ENCODE measurements at regions of chr1 and their contacts with region 1.

Region 1: GRCh38 chr1:16366722-16367257 is at the start of gene SZRD1:
- DNase-seq: peak; percentile 97
- ATAC-seq: peak; percentile 95
- H3K4me3 ChIP-seq: peak within 1 kb of the TSS; percentile 56 to 92
- H3K27ac ChIP-seq: peak within 1 kb of the TSS; percentile 72 to 95
- H3K4me1 ChIP-seq: peaks cover 2 to 3% of the 10 kb centered on the region in 2 donors
- H3K27me3 ChIP-seq: no peaks in the 10 kb centered on the region
- total RNA-seq, gene SZRD1: 128 to 172 TPM

Region 2: GRCh38 chr1:16078925-16079656 is 287.7 kb before region 1 on chr1:
- intact Hi-C with region 1: loop called (anchors 5 kb)
- DNase-seq: peak; percentile 84 to 92
- ATAC-seq: peak; percentile 80
- H3K4me3 ChIP-seq: no peak overlapping the region
- H3K27ac ChIP-seq: no peak overlapping the region
- H3K4me1 ChIP-seq: no peaks in the 10 kb centered on the region
- H3K27me3 ChIP-seq: no peaks in the 10 kb centered on the region

Region 3: DNA sequence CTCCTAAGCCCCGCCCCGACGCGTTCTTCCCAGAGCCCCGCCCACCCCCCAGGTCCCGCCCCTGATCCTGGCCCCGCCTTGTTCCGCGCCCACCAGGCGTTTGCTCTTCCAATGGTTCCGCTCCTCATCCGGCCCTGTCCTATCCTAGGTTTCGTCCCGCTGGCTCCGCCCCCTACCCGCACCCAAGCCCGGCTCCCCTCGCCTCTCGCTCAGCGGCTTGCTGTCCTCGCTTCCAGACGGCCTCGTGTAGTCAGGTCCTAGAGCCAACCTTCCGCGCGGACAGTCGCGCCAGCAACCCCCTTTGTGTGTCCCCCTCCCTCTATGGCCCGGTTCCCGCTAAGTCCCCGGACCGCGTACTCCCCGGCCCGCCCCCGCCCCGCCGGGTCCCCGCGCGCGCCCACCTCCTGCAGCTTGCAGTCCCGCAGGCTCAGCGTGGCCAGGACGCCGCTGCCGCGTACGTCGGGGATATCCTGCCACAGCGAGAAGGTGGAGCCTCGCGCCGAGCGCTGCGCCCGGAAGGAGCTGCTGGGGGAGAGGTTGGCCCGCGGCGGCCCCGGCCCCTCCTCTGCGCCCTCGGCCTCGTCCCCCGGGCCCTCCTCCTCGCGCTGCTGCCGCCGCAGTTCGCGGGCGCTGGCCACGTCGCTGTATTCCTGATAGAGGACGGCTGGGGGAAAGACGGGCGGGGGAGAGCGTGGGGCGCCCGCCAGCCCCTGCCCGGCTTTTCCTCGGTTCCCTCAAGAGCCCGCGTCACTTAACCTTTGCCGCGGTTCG is 160.1 kb before region 1 on chr1:
- intact Hi-C with region 1: loop called in 1 of 2 experiments (anchors 5 kb)
- DNase-seq: peak; percentile 99
- ATAC-seq: peak; percentile 94
- H3K4me3 ChIP-seq: peak overlapping the region in 1 of 2 donors; percentile 8
- H3K27ac ChIP-seq: peak overlapping the region in 1 of 2 donors; percentile 22
- H3K4me1 ChIP-seq: no peaks in the 10 kb centered on the region
- H3K27me3 ChIP-seq: no peaks in the 10 kb centered on the region

Region 4: GRCh38 chr1:16243936-16244649 is 122.7 kb before region 1 on chr1:
- intact Hi-C with region 1: loop called (anchors 1 to 5 kb)
- DNase-seq: peak; percentile 79 to 90
- ATAC-seq: peak; percentile 73
- H3K4me3 ChIP-seq: no peak overlapping the region
- H3K27ac ChIP-seq: peak overlapping the region in 1 of 2 donors; percentile 11
- H3K4me1 ChIP-seq: peaks cover 0 to 1% of the 10 kb centered on the region in 2 donors
- H3K27me3 ChIP-seq: no peaks in the 10 kb centered on the region

Region 5: GRCh38 chr1:16385659-16386453 is 19.1 kb after region 1 on chr1:
- intact Hi-C with region 1: loop called in 1 of 2 experiments (anchors 2 kb)
- DNase-seq: no peak
- ATAC-seq: no peak
- H3K4me3 ChIP-seq: no peak overlapping the region
- H3K27ac ChIP-seq: peak overlapping the region; percentile 53 to 97
- H3K4me1 ChIP-seq: peaks cover 10 to 16% of the 10 kb centered on the region in 2 donors
- H3K27me3 ChIP-seq: no peaks in the 10 kb centered on the region

Region 6: GRCh38 chr1:16440470-16441281 is 73.9 kb after region 1 on chr1 and contains the start of gene NECAP2:
- intact Hi-C with region 1: loop called (anchors 2 to 5 kb)
- DNase-seq: peak; percentile 96 to 99
- ATAC-seq: peak; percentile 97
- H3K4me3 ChIP-seq: peak within 1 kb of the TSS; percentile 61
- H3K27ac ChIP-seq: peak within 1 kb of the TSS in 1 of 2 donors; percentile 27
- H3K4me1 ChIP-seq: no peaks in the 10 kb centered on the region
- H3K27me3 ChIP-seq: no peaks in the 10 kb centered on the region
- total RNA-seq, gene NECAP2: 38.1 to 60.4 TPM

Measured in aorta (tissue), 5 donors.